Spleen (tissue), 13 donors: ENCODE measurements at regions of chr17 and their contacts with region 1.

Region 1: GRCh38 chr17:79715098-79715942 is 15.4 kb upstream of the ENPP7 start:
- DNase-seq: no peak
- H3K4me3 ChIP-seq: no peak overlapping the region
- H3K27ac ChIP-seq: no peak overlapping the region
- H3K4me1 ChIP-seq: no peaks in the 10 kb centered on the region
- H3K27me3 ChIP-seq: peaks cover 0 to 62% (median 14%) of the 10 kb centered on the region in 7 donors
- CTCF ChIP-seq: no peak
- POLR2A ChIP-seq: no peak

Region 2: DNA sequence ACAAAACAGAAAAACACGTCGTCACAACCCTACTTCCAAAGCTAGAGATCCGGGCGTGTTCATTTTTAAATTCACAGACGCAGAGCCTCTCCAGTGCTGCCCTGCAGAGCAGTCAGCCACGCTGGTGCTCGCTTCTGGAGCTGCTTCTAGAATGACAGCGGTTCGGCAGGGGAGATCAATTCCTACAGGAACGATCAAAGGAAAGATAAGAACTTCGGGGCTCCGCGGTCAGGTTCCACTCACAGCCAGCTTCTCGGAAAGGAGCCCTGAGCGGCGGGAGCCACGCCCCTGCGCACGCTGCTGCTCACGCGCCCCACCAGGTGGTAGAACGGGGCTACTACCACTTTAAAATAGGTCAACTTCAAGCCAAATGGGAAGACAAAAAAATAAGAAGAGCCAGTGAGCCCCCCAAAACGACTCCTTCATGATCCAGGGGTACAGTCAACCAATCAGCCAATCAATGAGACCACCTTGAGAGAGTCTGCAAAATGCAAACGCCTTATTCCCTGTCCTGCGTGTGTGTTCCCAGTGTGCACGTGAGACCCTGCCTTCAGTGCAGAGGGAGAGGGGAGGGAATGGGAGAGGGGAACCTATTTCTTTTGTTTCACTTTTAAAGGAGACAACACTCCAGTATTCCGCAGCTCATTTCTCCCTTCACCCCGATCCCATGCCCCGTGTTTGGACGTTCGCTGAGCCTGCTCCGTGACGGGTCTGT is 314.2 kb before region 1 on chr17:
- intact Hi-C with region 1: loop called (anchors 10 kb)
- DNase-seq: peak; percentile 91
- H3K4me3 ChIP-seq: peak overlapping the region in 6 of 8 donors; percentile 12 to 59 (median 18)
- H3K27ac ChIP-seq: no peak overlapping the region
- H3K4me1 ChIP-seq: peaks cover 0 to 13% (median 10%) of the 10 kb centered on the region in 6 donors
- H3K27me3 ChIP-seq: peaks cover 6 to 99% (median 53%) of the 10 kb centered on the region in 7 donors
- CTCF ChIP-seq: peak; percentile 53 to 88 (median 80)
- POLR2A ChIP-seq: no peak

Region 3: GRCh38 chr17:79612468-79613194 is 102.7 kb before region 1 on chr17:
- intact Hi-C with region 1: no loop called
- DNase-seq: no peak
- H3K4me3 ChIP-seq: no peak overlapping the region
- H3K27ac ChIP-seq: no peak overlapping the region
- H3K4me1 ChIP-seq: peaks cover 0 to 29% (median 11%) of the 10 kb centered on the region in 6 donors
- H3K27me3 ChIP-seq: peaks cover 7 to 99% (median 59%) of the 10 kb centered on the region in 7 donors
- CTCF ChIP-seq: peak in 8 of 11 experiments; percentile 9 to 51 (median 36)
- POLR2A ChIP-seq: no peak